ENCODE measurements at regions of chr14 and their contacts with region 1.

Region 1: GRCh38 chr14:77707724-77708408 is at the starts of genes ALKBH1 and SLIRP:
- DNase-seq: peak; percentile 97
- H3K4me3 Mint-ChIP-seq: peak within 1 kb of the TSS; percentile 82
- H3K27ac Mint-ChIP-seq: peak within 1 kb of the TSS; percentile 91
- H3K4me1 Mint-ChIP-seq: peaks cover 29% of the 10 kb centered on the region
- H3K27me3 Mint-ChIP-seq: no peaks in the 10 kb centered on the region
- total RNA-seq, gene ALKBH1: 17.9 and 19.2 TPM in 2 replicates
- total RNA-seq, gene SLIRP: 184 and 190 TPM in 2 replicates

Region 2: DNA sequence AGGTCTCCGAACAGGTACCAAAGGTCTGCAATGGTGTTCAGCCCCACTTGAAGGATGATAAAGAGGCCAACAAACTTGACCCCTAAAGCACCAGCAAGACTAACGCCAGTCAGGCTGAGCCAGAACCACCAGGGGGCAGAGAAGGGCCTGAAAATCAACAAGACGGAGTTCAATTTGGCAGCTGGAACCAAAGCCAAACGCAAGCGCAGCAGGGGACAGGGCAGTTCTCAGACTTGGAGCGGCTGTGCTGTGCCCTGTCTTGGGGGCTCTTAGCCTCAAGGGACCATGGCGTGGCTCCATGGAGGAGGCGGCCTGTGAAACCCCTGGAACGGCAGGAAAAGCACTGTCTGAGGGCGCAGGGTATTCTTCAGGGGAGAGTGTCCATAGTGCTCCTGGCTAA is 406.8 kb before region 1 on chr14:
- intact Hi-C with region 1: loop called (anchors 5 kb)
- DNase-seq: peak; percentile 88
- H3K4me3 Mint-ChIP-seq: no peak overlapping the region
- H3K27ac Mint-ChIP-seq: no peak overlapping the region
- H3K4me1 Mint-ChIP-seq: peaks cover 22% of the 10 kb centered on the region
- H3K27me3 Mint-ChIP-seq: no peaks in the 10 kb centered on the region

Region 3: GRCh38 chr14:77554207-77554606 is 153.7 kb before region 1 on chr14:
- intact Hi-C with region 1: loop called (anchors 10 kb)
- DNase-seq: peak; percentile 72
- H3K4me3 Mint-ChIP-seq: peak overlapping the region; percentile 70
- H3K27ac Mint-ChIP-seq: peak overlapping the region; percentile 84
- H3K4me1 Mint-ChIP-seq: peaks cover 19% of the 10 kb centered on the region
- H3K27me3 Mint-ChIP-seq: no peaks in the 10 kb centered on the region

Region 4: DNA sequence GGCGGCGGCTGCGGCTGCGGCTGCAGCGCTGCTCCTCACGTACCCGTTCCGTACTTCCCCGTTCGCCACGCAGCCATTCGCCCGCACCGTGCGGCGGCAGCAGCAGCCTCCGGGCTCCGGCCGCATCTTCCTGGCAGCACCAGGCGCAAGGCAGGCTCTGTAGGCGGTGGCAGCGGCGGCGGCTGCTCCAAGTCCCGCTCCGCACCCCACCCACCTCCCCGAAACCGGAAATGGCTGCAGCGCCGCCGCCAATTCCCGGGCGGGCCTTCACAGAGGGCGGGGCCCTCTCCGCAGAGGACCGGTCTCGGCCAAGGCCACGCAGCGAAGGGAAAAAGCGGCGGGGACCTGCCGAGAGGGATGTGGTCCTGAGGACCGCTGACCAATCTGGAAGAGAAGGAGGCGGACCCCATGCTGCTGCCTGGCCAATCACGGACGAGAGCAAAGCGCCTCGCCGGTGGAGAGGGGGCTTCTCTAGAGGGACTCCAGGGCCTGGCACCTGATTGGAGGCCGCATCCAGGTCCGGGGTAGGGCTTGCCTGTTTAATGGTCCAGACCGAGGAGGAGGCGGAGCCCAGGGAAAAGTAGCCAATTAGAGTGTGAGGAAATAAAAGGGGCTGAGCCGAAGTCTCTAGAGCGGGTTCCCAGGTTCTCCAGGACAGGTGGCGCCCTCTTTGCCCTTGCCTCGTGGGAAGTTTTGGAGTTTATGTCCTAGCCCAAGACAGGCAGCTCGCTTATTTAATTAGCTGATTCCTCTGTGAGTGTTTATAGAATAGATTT is 91.2 kb before region 1 on chr14 and contains the start of gene SPTLC2:
- intact Hi-C with region 1: loop called (anchors 5 kb)
- DNase-seq: peak; percentile 98
- H3K4me3 Mint-ChIP-seq: peak within 1 kb of the TSS; percentile 97
- H3K27ac Mint-ChIP-seq: peak within 1 kb of the TSS; percentile 94
- H3K4me1 Mint-ChIP-seq: peaks cover 42% of the 10 kb centered on the region
- H3K27me3 Mint-ChIP-seq: no peaks in the 10 kb centered on the region
- total RNA-seq, gene SPTLC2: 26.6 and 28.3 TPM in 2 replicates

Region 5: DNA sequence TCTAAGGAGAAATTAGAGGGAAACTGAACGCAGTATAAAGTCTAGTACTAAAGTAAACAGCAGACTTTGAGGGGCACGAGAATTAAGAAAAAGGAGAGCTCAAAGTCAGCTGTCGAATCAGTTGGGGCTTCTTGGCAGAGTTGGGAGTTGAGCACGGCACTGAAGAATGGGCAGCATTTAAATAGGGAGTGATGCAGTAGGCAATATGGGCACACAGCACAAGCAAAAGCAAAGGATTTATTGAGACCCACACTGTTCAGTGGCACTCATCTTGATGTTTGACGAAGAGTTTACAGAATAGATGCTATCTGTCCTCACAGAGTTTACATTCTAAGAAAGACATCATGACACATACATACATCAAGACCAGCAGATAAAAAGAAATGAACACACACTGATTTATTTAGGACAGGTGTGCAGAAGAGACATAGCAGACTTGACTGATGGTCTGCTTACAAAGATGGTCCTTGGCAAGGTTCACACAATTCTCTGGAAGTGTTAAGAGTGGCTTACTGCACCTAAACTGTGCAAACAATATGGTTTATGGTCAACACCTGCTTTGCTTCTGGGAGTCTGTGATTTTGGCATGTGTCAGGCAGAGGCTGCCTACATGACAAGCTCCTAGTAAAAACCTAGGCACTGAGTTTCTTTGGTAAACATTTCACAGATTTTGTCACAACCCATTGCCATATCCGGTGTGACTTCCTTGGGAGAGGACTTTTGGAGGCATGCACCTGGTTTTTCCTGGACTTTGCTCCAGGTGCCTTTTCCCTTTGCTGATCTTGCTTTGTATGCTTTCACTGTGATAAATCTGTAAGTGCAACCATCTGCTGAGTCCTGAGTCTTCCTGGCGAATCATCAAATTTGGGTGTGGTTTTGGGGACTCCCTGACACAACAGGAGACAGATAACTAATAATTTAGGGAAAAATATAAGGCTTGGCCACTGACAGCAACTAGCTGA is 26.4 kb before region 1 on chr14:
- intact Hi-C with region 1: no loop called
- DNase-seq: no peak
- H3K4me3 Mint-ChIP-seq: no peak overlapping the region
- H3K27ac Mint-ChIP-seq: no peak overlapping the region
- H3K4me1 Mint-ChIP-seq: peaks cover 3% of the 10 kb centered on the region
- H3K27me3 Mint-ChIP-seq: no peaks in the 10 kb centered on the region

Region 6: DNA sequence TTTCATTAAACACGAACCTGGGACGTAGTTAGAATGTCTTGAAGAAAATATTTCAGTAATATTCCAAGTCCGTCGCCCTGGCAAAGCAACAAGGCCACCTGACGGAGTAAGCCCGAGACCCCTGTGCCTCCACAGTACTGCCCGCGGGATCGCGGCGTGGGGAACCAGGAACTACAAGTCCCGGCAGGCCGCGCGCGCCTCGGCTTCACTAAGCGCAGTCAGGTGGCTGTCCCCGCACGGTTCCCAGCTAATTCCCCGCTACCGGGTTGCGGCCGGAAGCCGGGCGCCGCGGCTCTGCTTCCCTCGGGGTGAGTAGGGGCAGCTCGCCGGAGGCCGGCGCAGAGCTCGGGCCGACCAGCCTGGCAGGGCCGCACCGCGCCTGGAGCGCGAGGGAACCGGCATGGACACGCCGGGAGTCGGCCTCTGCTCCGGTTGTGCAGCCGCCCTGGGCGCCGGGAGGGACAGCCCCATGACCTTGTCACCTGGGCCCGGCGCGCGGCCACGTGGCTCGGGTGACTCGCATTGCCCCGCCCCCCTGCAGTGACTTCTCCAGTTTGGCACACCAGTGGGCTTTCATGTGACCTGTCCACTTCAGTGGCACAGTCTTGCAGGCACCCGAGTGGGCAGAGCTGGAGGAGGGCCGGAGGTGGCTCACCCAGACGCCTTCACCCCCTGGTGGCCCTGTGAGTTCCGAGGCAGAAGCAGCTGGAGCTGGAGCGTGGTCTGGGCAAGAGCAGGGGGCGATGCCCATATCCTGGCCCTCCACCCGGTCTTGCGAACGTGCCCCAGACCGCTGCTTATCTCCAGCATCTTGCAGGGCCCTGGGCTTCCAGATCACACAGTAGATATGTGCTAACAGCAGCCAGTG is 92.2 kb after region 1 on chr14 and contains the start of gene ADCK1:
- intact Hi-C with region 1: loop called (anchors 1 kb)
- DNase-seq: peak; percentile 96
- H3K4me3 Mint-ChIP-seq: peak within 1 kb of the TSS; percentile 88
- H3K27ac Mint-ChIP-seq: peak within 1 kb of the TSS; percentile 88
- H3K4me1 Mint-ChIP-seq: peaks cover 7% of the 10 kb centered on the region
- H3K27me3 Mint-ChIP-seq: no peaks in the 10 kb centered on the region
- total RNA-seq, gene ADCK1: 4.9 and 5.3 TPM in 2 replicates